Natural killer cell (primary cell): ENCODE measurements at regions of chr12 and their contacts with region 1.

Region 1: GRCh38 chr12:67355578-67356379 is 86.6 kb downstream of the CAND1 start:
- DNase-seq: peak in 1 of 2 donors; percentile 80
- ATAC-seq: peak in 2 of 3 donors; percentile 64 to 66
- H3K4me3 ChIP-seq: no peak overlapping the region
- H3K4me3 Mint-ChIP-seq: no peak overlapping the region
- H3K27ac ChIP-seq: no peak overlapping the region
- H3K27ac Mint-ChIP-seq: no peak overlapping the region
- H3K4me1 ChIP-seq: no peaks in the 10 kb centered on the region
- H3K4me1 Mint-ChIP-seq: peaks cover 0 to 8% of the 10 kb centered on the region in 2 donors
- H3K27me3 ChIP-seq: no peaks in the 10 kb centered on the region
- H3K27me3 Mint-ChIP-seq: peaks cover 3 to 5% of the 10 kb centered on the region in 2 donors
- CTCF ChIP-seq: peak; percentile 81

Region 2: DNA sequence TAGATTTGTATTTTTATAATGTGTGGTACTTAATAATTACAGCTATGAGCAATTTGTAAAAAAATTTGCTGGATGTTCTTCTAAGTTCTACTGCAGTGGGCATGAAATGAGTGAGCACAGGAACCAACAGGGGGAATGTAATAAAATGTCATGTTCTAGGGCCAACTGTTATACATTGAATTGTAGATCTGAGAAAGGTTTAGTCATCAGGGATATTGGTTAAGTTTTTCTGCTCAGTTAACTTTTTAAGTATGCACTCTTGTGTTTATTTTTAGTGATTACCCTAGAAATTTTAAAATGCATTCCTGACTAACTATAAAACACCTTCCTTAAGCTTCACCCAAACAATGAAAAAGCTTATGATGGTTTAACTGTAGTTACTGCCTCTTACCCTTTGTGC is 15.2 kb after region 1 on chr12:
- intact Hi-C with region 1: no loop called
- DNase-seq: no peak
- ATAC-seq: no peak
- H3K4me3 ChIP-seq: no peak overlapping the region
- H3K4me3 Mint-ChIP-seq: no peak overlapping the region
- H3K27ac ChIP-seq: no peak overlapping the region
- H3K27ac Mint-ChIP-seq: no peak overlapping the region
- H3K4me1 ChIP-seq: no peaks in the 10 kb centered on the region
- H3K4me1 Mint-ChIP-seq: no peaks in the 10 kb centered on the region
- H3K27me3 ChIP-seq: no peaks in the 10 kb centered on the region
- H3K27me3 Mint-ChIP-seq: no peaks in the 10 kb centered on the region
- CTCF ChIP-seq: no peak

Region 3: DNA sequence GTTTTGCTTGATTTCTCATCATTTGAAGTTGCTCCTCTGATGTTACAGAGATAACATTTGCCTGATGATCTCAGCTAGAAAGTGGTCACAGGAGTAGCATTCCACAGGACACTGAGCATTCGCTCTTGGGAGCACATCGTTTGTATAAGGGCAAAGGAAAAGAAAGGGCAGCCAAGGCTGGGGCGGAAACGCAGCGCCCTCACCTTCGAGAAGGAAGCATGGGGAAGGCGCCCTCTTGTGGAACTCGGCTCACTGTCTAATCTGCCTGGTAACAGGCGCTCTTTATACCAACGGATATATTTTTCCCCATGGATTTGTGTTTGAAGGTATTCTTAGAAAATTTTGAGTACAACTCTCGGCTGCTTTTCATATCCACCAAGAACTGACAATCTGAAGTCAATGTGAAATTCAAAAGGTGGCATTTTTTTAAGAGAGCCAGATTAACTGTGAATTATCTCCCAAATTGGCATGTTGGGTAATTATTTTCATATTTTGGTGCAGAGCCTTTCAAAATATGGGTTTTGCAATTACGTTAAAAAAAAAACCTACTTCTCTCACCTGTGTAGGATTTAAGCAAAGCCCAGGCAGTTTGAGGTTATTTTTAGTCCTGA is 86.1 kb after region 1 on chr12:
- intact Hi-C with region 1: loop called (anchors 5 kb)
- DNase-seq: peak; percentile 59 to 88
- ATAC-seq: peak; percentile 82 to 97 (median 97)
- H3K4me3 ChIP-seq: no peak overlapping the region
- H3K4me3 Mint-ChIP-seq: peak overlapping the region; percentile 25
- H3K27ac ChIP-seq: no peak overlapping the region
- H3K27ac Mint-ChIP-seq: peak overlapping the region in 1 of 2 donors; percentile 77
- H3K4me1 ChIP-seq: peaks cover 15% of the 10 kb centered on the region
- H3K4me1 Mint-ChIP-seq: peaks cover 28 to 33% of the 10 kb centered on the region in 2 donors
- H3K27me3 ChIP-seq: no peaks in the 10 kb centered on the region
- H3K27me3 Mint-ChIP-seq: no peaks in the 10 kb centered on the region
- CTCF ChIP-seq: peak; percentile 83

Region 4: DNA sequence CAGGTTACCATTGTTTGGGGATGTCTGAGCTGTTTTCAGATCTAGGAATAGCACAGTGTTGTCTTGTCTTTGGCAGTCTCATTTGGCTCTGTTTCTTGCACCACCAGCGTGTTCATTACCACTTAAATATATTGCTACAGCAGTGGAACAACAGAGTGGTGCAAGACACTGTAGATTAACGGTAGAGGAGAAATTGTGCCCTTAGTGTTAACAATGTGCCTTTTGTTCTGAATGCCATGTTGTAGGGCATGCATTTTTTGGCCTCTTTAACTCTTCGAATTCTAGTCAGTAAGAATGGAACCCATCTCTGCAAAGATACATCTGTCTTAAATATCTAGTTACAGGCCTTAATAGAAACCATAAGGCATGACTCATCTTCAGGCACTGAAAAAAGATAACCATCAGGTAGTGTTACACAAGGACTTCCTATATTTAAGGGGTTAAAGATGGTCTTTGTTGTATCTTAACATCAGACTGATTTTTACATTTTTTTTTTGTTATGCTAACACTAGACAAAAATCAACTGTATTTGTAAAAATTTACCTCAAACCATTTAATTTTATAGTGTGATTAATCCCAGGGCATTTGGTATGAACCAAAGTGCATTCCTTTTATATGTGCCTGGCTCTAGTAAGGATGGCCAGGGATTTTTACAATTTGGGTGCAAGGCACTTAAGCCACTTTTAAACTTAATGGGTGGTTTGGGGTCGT is 305.7 kb after region 1 on chr12:
- intact Hi-C with region 1: loop called (anchors 5 kb)
- DNase-seq: no peak
- ATAC-seq: peak in 1 of 3 donors; percentile 44
- H3K4me3 ChIP-seq: no peak overlapping the region
- H3K4me3 Mint-ChIP-seq: peak overlapping the region; percentile 28
- H3K27ac ChIP-seq: no peak overlapping the region
- H3K27ac Mint-ChIP-seq: peak overlapping the region; percentile 65 to 66
- H3K4me1 ChIP-seq: peaks cover 12% of the 10 kb centered on the region
- H3K4me1 Mint-ChIP-seq: peaks cover 75 to 81% of the 10 kb centered on the region in 2 donors
- H3K27me3 ChIP-seq: no peaks in the 10 kb centered on the region
- H3K27me3 Mint-ChIP-seq: no peaks in the 10 kb centered on the region
- CTCF ChIP-seq: no peak

Region 5: DNA sequence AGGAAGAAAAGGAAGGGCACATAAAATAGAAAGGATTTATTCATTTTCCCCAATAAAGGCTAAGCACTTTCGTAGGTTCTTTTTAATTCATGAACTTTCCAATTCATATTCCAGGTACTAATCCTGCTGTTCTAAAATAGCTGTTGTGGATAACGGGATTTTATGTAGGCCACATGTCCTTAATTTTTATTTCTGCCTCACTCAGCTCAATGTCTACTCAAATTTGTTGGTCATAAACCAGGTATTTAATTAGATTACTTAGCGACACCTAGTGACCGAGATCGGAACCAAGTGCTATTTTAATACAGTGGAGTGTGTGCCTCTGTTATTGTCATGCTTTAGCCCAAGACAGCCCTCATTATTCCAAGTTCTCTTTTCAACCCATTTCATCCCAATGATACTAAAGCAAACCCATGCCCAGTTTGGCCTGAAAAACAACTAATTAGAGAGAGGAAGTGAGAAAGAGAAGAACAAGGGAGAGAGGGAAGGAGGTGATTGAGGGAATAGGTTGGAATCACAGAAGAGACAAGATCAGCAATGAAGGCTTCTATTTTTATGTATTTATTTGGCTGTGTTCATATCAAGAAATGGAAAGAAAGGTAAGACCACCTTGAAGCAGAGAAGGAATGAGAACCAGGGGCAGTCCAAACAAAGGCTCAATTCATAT is 587.6 kb after region 1 on chr12:
- intact Hi-C with region 1: loop called (anchors 1 kb)
- DNase-seq: peak; percentile 24 to 85
- ATAC-seq: peak; percentile 60 to 83 (median 80)
- H3K4me3 ChIP-seq: no peak overlapping the region
- H3K4me3 Mint-ChIP-seq: no peak overlapping the region
- H3K27ac ChIP-seq: no peak overlapping the region
- H3K27ac Mint-ChIP-seq: peak overlapping the region in 1 of 2 donors; percentile 10
- H3K4me1 ChIP-seq: no peaks in the 10 kb centered on the region
- H3K4me1 Mint-ChIP-seq: peaks cover 0 to 5% of the 10 kb centered on the region in 2 donors
- H3K27me3 ChIP-seq: no peaks in the 10 kb centered on the region
- H3K27me3 Mint-ChIP-seq: peaks cover 15 to 47% of the 10 kb centered on the region in 2 donors
- CTCF ChIP-seq: peak; percentile 82

Region 6: DNA sequence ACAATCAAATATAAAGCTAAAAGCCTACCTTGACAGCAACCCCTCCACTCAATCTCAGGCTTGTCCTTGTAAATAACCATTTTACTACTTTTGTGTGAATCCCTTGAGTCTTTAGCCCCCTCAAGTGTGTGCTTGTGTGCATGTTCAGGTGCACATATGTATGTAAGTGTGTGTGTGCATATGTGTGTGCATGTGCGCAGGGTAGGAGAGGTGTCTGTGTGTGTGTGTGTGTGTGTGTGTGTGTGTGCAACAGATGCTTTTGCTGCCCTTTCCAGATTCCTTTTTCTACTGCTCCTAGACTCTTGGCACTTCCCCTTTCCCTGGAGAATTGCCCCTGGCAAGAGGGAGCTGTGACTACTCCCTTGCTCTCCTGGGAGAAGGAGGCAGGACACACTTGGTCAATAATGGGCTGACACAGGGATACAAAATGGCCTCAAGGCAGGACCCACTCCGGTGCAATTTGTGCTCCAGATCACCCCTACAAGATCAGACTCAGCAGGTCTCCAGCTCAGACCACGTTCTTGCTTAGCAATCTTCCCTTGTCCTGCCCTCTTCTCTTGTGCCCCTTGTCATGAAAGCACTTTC is 730.3 kb after region 1 on chr12:
- intact Hi-C with region 1: no loop called
- DNase-seq: no peak
- ATAC-seq: peak in 1 of 3 donors; percentile 46
- H3K4me3 ChIP-seq: no peak overlapping the region
- H3K4me3 Mint-ChIP-seq: no peak overlapping the region
- H3K27ac ChIP-seq: no peak overlapping the region
- H3K27ac Mint-ChIP-seq: no peak overlapping the region
- H3K4me1 ChIP-seq: no peaks in the 10 kb centered on the region
- H3K4me1 Mint-ChIP-seq: peaks cover 12 to 15% of the 10 kb centered on the region in 2 donors
- H3K27me3 ChIP-seq: no peaks in the 10 kb centered on the region
- H3K27me3 Mint-ChIP-seq: no peaks in the 10 kb centered on the region
- CTCF ChIP-seq: no peak

Region 7: GRCh38 chr12:68317047-68317667 is 961.4 kb after region 1 on chr12:
- intact Hi-C with region 1: loop called (anchors 10 kb)
- DNase-seq: peak in 1 of 2 donors; percentile 81
- ATAC-seq: peak in 1 of 3 donors; percentile 41
- H3K4me3 ChIP-seq: no peak overlapping the region
- H3K4me3 Mint-ChIP-seq: no peak overlapping the region
- H3K27ac ChIP-seq: no peak overlapping the region
- H3K27ac Mint-ChIP-seq: no peak overlapping the region
- H3K4me1 ChIP-seq: no peaks in the 10 kb centered on the region
- H3K4me1 Mint-ChIP-seq: no peaks in the 10 kb centered on the region
- H3K27me3 ChIP-seq: no peaks in the 10 kb centered on the region
- H3K27me3 Mint-ChIP-seq: no peaks in the 10 kb centered on the region
- CTCF ChIP-seq: peak; percentile 87